ENCODE measurements at regions of chr7 and their contacts with region 1.

Region 1: DNA sequence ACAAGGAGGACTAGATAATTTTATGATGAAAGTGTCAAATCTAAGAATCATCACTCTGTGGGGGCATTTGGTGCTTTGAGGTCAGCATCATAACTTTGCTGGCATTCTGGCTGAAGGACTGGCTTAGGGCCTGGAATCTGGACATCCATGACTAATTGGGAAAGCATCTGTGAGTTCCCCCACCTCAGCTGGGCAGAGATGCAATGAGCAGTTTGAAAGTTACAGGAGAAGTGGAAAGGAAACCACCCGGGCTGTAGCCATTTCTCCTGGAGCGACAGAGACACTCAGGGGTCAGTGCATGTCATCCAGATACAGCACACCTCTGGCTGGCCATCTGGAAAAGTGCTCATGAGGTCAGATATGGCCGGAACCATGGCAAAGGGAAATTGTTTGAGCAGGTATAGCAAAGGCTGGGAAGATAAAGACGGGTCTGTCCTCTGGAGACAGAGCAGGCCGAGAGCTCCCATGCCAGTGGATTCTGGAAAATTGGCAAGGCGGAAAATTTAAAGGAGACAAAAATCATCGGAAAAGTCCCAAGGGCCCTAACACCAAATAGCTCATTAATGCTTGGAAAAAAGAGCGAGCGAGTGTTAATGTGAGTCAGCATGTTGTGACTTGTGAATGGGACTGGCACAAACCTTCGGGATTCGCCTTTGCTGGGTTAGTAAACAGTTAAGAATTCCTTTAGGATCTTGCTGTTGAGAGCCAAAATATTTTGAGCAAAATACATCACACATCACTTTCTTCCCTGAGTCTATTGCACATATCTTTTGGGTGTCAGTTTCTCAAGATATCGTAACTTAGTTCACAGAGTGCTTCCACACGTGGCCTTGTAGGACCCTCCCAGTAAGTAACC is 188.4 kb upstream of the AGK start:
- DNase-seq: no peak
- ATAC-seq: peak; percentile 83 to 88

Region 2: DNA sequence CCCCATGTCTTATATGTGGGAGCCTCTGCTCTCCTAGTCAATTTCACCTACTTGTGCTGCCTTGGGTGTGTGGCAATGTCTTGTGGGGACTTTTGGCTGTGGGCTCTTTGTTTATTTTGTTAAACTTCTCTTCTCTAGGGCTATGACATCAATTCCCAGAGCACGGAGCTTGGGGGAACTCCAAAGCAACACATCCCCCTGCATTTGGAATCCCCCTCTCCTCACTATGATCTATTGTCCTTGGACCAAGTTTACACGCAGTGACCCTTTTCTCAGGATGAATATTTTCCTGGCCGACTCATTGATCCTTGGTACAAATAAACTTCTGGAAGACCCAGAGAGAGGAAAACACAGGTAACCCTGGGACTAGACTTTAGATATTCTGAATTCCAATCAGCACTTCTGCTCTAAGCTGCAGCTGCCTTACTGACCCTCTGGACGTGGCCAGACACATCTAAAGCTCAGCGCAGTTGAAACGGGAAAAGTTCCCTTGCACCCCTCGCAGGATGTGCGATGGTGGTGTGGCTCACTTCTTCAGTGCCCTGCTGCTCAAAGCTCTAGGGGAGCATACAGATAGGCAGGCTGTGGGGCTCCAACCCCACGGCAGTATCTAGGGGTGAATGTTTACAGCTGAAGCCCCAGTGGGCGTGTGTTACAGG is 178.1 kb before region 1 on chr7:
- intact Hi-C with region 1: no loop called
- DNase-seq: no peak
- ATAC-seq: no peak

Region 3: GRCh38 chr7:141231018-141231792 is 131.6 kb before region 1 on chr7:
- intact Hi-C with region 1: no loop called
- DNase-seq: peak; percentile 34
- ATAC-seq: peak; percentile 59 to 76

Region 4: DNA sequence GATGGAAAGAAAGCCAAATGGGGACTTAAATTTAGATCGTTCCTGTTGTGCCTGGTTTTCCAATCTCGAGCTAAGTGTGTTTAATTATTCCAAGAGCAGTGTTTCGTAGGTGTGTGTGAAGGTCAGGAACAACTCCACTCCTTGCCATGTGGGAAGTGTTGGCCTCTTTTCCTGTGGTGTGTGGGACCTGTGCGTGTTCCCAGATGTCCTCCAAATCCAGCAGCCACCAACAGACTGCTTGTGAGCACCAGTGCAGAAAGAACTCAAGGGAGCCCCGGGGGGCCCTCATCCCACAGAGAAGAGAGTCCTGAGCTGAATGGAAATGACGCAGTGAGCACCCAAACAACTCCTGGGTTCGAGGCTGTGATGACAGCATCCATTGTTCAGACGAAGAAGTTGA is 61.3 kb before region 1 on chr7:
- intact Hi-C with region 1: loop called in 1 of 2 experiments (anchors 5 kb)
- DNase-seq: peak; percentile 28
- ATAC-seq: peak; percentile 65 to 84

Region 5: DNA sequence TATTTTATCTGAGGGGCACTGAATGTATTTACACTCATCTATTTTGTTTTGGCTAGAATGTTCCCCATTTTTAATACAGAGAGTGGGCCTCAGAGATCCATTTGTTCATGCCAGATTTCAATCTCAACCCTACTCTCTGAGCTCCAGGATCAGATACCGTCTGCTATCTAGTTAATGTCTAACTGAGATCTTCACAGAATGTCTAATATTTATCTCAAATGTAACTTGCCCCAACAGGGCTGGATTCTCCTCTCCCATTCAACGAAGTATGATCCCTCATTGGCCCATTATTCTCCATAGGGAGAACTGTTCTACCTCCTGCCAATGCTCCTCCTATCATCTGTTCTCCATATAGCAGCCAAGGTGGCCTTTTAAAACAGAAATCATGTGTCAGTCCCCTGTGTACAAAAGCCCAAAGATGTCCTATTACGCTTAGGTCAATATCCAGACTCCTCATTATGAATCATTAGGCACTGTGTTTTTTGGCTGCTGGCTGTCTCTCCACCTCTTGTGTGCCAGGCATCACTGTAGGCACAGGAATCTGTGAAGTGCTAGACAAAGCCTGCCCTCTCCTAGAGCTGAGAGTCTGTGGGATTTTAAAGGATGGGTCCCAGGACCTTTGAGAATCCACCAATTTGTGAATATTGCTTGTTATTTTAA is 19.1 kb after region 1 on chr7:
- intact Hi-C with region 1: no loop called
- DNase-seq: no peak
- ATAC-seq: peak in 1 of 2 donors; percentile 86

Region 6: GRCh38 chr7:141847996-141848395 is 485.2 kb after region 1 on chr7:
- intact Hi-C with region 1: no loop called
- DNase-seq: no peak
- ATAC-seq: no peak